A549 (cell line): ENCODE measurements at regions of chr2 and their contacts with region 1.

Region 1: GRCh38 chr2:27370026-27370815 is at the starts of genes EIF2B4 and SNX17:
- DNase-seq: peak; percentile 98 to 99
- ATAC-seq: peak; percentile 90 to 94
- H3K4me3 ChIP-seq: peak within 1 kb of the TSS; percentile 79
- H3K27ac ChIP-seq: peak within 1 kb of the TSS; percentile 89 to 95
- H3K4me1 ChIP-seq: peaks cover 24% of the 10 kb centered on the region
- CTCF ChIP-seq: peak; percentile 94
- EP300 ChIP-seq: peak in 1 of 2 experiments; percentile 24; a peak in 1 of 5 replicates
- POLR2A ChIP-seq: peak; percentile 90
- RAD21 ChIP-seq: peak; percentile 58; a peak in 3 of 5 replicates
- polyA plus RNA-seq, gene EIF2B4: 62.8 and 90.3 TPM in 2 replicates
- polyA plus RNA-seq, gene SNX17: 141 and 158 TPM in 2 replicates

Region 2: DNA sequence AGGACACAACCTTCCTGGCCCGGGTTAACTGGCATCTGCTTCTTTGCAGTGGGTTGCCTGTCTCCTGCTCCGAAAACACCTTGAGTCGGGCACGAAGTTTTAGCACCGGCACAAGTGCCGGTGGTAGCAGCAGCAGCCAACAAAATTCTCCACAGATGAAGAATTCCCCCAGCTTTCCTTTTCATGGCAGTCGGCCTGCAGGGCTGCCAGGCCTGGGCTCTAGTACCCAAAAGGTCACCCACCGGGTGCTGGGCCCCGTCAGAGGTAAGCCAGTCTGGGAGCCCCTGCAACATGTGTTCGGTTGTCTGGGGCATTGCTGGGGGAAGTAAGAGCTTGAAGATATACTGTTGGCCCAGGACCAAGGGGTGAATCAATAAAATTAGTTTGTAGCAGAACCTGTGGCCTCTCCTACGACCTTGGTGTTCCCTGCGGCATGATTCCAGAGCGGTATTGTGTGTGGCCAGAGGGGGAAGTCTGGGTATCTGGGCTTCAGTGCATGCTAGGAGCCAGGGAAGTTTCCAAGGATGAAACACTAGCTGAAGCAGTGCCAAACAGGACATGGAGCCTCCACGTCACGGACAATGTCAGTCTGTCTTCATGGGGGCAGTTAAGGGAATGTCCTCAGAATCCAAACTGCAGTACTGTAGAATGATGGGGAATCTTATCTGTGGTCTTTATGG is 310.9 kb before region 1 on chr2:
- CTCF ChIA-PET with region 1: no interaction called
- POLR2A ChIA-PET with region 1: no interaction called
- DNase-seq: no peak
- ATAC-seq: no peak
- H3K4me3 ChIP-seq: no peak overlapping the region
- H3K27ac ChIP-seq: no peak overlapping the region
- H3K4me1 ChIP-seq: peaks cover 5% of the 10 kb centered on the region; the same call in 1 of the 3 replicates
- CTCF ChIP-seq: no peak
- EP300 ChIP-seq: no peak
- POLR2A ChIP-seq: no peak
- RAD21 ChIP-seq: no peak

Region 3: GRCh38 chr2:27347641-27348040 is 22.6 kb before region 1 on chr2:
- CTCF ChIA-PET with region 1: interaction called, 16 read pairs
- POLR2A ChIA-PET with region 1: no interaction called
- DNase-seq: no peak
- ATAC-seq: no peak; a peak in 1 of 6 replicates
- H3K4me3 ChIP-seq: no peak overlapping the region
- H3K27ac ChIP-seq: no peak overlapping the region
- H3K4me1 ChIP-seq: no peaks in the 10 kb centered on the region
- CTCF ChIP-seq: no peak
- EP300 ChIP-seq: no peak
- POLR2A ChIP-seq: no peak
- RAD21 ChIP-seq: no peak

Region 4: DNA sequence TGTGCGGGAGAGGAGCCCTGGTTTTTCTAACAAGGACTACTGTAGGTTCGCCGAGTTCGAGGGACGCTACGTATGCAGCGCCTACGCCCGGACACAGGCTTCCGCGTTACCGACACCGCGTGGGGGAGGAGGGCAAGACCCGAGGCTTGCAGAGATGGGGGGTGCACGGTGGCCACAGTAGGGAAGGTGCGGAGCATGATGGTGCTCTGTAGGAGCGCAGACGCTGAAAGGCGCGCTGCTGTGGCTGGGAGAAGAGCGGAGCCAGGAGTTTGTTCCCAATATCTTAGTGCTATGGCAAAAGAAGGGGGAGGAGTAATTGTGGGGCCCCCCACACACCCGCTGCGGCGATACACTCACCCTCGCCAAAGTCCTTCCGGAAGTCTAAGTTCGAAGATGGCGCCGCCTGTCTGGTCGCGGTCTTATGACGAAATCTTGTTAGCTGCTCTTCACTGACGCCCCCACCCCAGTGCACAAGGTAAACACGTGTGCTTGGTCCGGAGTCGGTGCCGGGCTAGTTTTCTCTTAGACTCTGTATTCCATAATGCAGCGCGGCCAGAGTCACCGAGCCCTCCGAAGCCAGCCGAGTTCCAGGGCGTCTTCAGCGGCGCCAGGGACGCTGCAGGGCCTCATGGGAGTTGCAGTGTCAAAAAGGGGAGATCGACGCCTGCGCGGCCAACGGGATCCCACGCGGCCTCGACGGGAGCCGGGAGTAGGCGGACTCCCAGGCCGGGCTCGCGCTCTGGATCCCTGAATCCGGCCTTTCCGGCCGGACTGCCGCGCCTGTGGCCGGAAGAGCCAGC is 13.6 kb before region 1 on chr2 and contains the start of gene GTF3C2:
- CTCF ChIA-PET with region 1: interaction called, 21 read pairs
- POLR2A ChIA-PET with region 1: interaction called, 25 read pairs
- DNase-seq: peak; percentile 95 to 99
- ATAC-seq: peak; percentile 93 to 96
- H3K4me3 ChIP-seq: peak within 1 kb of the TSS; percentile 82
- H3K27ac ChIP-seq: peak within 1 kb of the TSS; percentile 83 to 91
- H3K4me1 ChIP-seq: peaks cover 28% of the 10 kb centered on the region
- CTCF ChIP-seq: no peak
- EP300 ChIP-seq: no peak
- POLR2A ChIP-seq: peak; percentile 50
- RAD21 ChIP-seq: no peak
- polyA plus RNA-seq, gene GTF3C2: 101 and 130 TPM in 2 replicates

Region 5: DNA sequence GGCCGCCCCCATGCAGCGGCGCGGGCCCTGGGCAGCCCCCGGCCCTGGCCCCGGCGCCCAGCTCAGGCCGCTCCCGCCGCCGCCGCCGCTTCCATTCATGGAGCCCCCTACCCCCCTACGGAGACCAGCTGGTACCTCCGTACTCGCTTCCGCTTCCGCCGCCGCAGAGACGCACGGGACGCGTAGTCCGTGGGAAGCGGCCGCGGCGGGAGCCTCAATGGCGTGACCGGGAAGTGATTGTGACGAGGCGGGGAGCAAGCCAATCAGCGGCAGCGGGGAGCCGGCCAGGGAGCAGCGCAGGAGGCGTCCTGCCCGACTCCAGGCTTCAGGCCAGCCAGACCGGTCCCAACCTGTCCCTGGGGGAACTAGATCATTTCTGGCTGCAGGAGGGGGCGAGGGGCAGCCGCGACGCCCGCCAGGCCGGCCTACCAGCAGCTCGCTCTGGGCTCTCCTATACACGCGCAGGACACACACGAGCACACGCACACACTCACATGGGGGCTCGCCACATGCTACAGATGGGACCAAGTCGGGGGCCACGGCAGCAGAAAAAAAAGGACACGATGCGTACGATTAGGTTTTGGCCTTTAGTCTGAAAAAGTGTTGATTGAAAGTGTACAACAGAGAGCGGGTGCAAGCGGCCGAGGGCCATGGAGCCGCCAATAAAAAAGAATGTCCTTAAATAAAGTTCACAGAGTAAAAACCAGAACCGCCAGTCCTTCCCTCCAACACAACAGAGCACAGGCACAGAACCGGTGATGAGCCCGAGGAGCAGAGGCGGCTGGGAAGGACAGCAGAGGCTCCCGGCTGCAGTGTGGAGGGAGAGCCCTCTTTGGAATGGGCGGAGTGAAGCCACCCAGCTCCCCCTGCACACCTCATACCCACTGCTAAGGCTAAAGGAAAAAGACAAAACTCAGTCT is 10.7 kb after region 1 on chr2 and contains the start of gene ZNF513:
- CTCF ChIA-PET with region 1: interaction called, 28 read pairs
- POLR2A ChIA-PET with region 1: interaction called, 26 read pairs
- DNase-seq: peak; percentile 94
- ATAC-seq: peak; percentile 81 to 88
- H3K4me3 ChIP-seq: peak within 1 kb of the TSS; percentile 72
- H3K27ac ChIP-seq: peak within 1 kb of the TSS; percentile 92 to 94
- H3K4me1 ChIP-seq: peaks cover 24% of the 10 kb centered on the region
- CTCF ChIP-seq: no peak
- EP300 ChIP-seq: no peak
- POLR2A ChIP-seq: peak; percentile 56
- RAD21 ChIP-seq: no peak
- polyA plus RNA-seq, gene ZNF513: 9.9 and 10.8 TPM in 2 replicates